MCF 10A (cell line): ENCODE measurements at regions of chr2 and their contacts with region 1.

Region 1: GRCh38 chr2:78832481-78832880 is 193.0 kb upstream of the REG3G start:
- DNase-seq: no peak
- H3K4me3 Mint-ChIP-seq: no peak overlapping the region
- H3K27ac Mint-ChIP-seq: no peak overlapping the region
- H3K4me1 Mint-ChIP-seq: no peaks in the 10 kb centered on the region
- H3K27me3 Mint-ChIP-seq: peaks cover 12% of the 10 kb centered on the region
- CTCF ChIP-seq: no peak

Region 2: GRCh38 chr2:78845664-78846185 is 13.2 kb after region 1 on chr2:
- CTCF ChIA-PET with region 1: no interaction called
- POLR2A ChIA-PET with region 1: no interaction called
- intact Hi-C with region 1: loop called (anchors 2 kb)
- DNase-seq: no peak
- H3K4me3 Mint-ChIP-seq: no peak overlapping the region
- H3K27ac Mint-ChIP-seq: no peak overlapping the region
- H3K4me1 Mint-ChIP-seq: no peaks in the 10 kb centered on the region
- H3K27me3 Mint-ChIP-seq: peaks cover 19% of the 10 kb centered on the region
- CTCF ChIP-seq: no peak

Region 3: DNA sequence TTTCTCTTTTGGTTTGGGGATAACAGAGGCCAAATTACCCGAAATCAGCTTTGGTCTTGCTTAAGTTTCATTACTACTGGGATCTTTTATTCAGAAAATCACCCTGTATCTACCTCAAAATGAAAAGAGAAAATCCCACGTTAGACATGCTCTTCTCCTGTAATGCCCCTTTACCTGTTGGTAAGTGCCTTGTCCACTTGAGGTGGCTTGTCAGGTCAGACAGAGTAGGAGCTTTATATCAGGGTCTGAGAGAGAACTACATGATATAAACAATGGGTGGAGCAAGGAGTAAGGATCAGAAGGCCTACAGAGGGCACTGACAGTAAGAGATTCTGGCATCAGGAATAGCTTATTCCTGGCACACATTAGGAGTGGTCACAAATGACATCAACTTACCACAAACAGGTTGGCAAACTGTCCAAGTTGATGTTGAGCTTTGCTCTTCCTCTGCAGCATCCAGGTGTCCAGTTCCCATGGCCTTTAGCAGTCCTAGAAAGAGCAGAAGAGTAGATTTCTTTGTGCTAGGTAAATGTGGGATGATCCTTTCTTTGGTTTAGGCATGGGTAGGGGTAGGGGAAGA is 255.4 kb after region 1 on chr2 and contains the start of gene REG1B:
- CTCF ChIA-PET with region 1: no interaction called
- POLR2A ChIA-PET with region 1: no interaction called
- intact Hi-C with region 1: no loop called
- DNase-seq: no peak
- H3K4me3 Mint-ChIP-seq: no peak within 1 kb of the TSS
- H3K27ac Mint-ChIP-seq: no peak within 1 kb of the TSS
- H3K4me1 Mint-ChIP-seq: no peaks in the 10 kb centered on the region
- H3K27me3 Mint-ChIP-seq: no peaks in the 10 kb centered on the region
- CTCF ChIP-seq: no peak
- total RNA-seq, gene REG1B: not detected in 2 replicates